ENCODE measurements at regions of chr6 and their contacts with region 1.

Region 1: DNA sequence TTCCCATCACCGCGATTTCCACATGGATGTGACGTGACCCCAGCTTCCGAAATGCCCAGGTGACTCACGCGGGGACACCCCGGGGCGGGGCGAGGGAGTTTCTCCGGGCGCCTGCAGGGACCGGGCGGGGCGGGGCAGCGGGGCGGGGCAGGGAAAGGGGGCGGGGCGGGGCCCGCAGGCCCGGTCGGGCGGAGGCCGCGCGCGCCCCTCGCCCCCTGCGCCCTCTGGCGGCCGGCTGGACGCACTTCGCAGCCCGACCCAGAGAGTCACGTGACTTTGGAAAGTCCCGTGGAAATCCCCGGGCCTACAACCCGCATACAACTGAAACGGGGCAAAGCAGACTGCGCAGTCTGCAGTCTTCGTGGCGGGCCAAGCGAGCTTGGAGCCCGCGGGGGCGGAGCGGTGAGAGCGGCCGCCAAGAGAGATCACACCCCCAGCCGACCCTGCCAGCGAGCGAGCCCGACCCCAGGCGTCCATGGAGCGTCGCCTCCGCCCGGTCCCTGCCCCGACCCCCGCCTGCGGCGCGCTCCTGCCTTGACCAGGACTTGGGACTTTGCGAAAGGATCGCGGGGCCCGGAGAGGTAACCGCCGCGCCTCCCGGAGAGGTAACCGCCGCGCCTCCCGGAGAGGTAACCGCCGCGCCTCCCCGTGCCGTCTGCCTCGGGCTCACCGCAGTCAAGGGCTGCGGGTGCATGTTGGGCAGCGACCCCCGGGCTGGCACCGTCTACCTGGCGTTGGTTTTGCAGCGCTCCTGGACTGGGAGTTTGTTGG is at the start of gene TNFAIP3:
- DNase-seq: peak; percentile 91 to 98 (median 95)
- ATAC-seq: peak; percentile 72
- H3K4me3 ChIP-seq: peak within 1 kb of the TSS; percentile 75 to 79
- H3K4me3 Mint-ChIP-seq: peak within 1 kb of the TSS; percentile 98
- H3K27ac ChIP-seq: peak within 1 kb of the TSS; percentile 95 to 96
- H3K27ac Mint-ChIP-seq: peak within 1 kb of the TSS; percentile 99
- H3K4me1 ChIP-seq: peaks cover 43% of the 10 kb centered on the region
- H3K4me1 Mint-ChIP-seq: peaks cover 47% of the 10 kb centered on the region
- H3K27me3 ChIP-seq: no peaks in the 10 kb centered on the region
- H3K27me3 Mint-ChIP-seq: no peaks in the 10 kb centered on the region
- CTCF ChIP-seq: peak; percentile 69
- total RNA-seq, gene TNFAIP3: 3,739 to 3,807 TPM

Region 2: GRCh38 chr6:136609873-136610706 is 1257.0 kb before region 1 on chr6:
- CTCF ChIA-PET with region 1: no interaction called
- POLR2A ChIA-PET with region 1: no interaction called
- intact Hi-C with region 1: no loop called
- DNase-seq: peak in 1 of 9 experiments; percentile 18
- ATAC-seq: no peak
- H3K4me3 ChIP-seq: no peak overlapping the region
- H3K4me3 Mint-ChIP-seq: no peak overlapping the region
- H3K27ac ChIP-seq: no peak overlapping the region
- H3K27ac Mint-ChIP-seq: peak overlapping the region; percentile 75
- H3K4me1 ChIP-seq: no peaks in the 10 kb centered on the region
- H3K4me1 Mint-ChIP-seq: peaks cover 3% of the 10 kb centered on the region
- H3K27me3 ChIP-seq: no peaks in the 10 kb centered on the region
- H3K27me3 Mint-ChIP-seq: no peaks in the 10 kb centered on the region
- CTCF ChIP-seq: no peak

Region 3: DNA sequence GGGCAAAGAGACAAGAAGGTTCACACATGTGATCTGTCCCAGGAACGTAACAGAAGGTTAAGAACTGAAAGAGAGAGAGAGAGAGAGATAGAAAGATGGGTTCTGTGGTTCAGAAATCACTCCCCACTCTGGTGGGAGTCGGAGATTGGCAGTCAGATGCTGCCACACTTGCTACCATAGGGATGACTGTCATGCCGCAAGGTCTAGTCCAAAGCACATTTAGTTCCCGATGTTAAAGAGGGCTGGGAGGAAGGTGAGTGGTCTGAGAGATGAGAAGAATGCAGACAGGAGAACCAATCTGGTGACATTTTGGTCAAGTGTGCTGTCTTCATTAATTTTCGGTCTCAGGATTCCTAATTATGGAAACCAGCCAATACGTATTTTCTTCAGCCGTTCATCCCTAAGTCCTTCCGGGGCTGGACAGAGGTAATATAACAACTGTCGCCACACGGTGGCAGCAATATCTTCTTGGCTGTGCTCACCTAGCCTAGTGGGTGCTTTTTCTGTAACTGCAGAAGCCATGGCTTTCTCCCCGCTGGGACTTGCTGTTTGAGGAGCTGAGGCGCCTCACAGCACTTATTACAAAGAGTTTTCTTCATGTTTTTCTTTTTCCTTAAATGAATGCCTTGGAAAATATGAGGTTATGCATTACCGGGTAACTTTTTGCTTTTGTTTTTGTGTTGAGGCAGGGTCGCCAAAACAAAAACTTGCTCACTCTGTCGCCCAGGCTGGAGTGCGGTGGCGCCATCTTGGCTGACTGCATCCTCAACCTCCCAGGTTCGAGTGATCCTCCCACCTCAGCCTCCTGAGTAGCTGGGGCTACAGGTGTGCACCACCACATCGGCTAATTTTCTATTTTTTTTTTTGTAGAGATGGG is 899.0 kb before region 1 on chr6:
- CTCF ChIA-PET with region 1: no interaction called
- POLR2A ChIA-PET with region 1: no interaction called
- intact Hi-C with region 1: no loop called
- DNase-seq: peak; percentile 19 to 74 (median 60)
- ATAC-seq: peak; percentile 61
- H3K4me3 ChIP-seq: no peak overlapping the region
- H3K4me3 Mint-ChIP-seq: no peak overlapping the region
- H3K27ac ChIP-seq: no peak overlapping the region
- H3K27ac Mint-ChIP-seq: no peak overlapping the region
- H3K4me1 ChIP-seq: peaks cover 4% of the 10 kb centered on the region
- H3K4me1 Mint-ChIP-seq: no peaks in the 10 kb centered on the region
- H3K27me3 ChIP-seq: no peaks in the 10 kb centered on the region
- H3K27me3 Mint-ChIP-seq: peaks cover 32% of the 10 kb centered on the region
- CTCF ChIP-seq: peak; percentile 59

Region 4: DNA sequence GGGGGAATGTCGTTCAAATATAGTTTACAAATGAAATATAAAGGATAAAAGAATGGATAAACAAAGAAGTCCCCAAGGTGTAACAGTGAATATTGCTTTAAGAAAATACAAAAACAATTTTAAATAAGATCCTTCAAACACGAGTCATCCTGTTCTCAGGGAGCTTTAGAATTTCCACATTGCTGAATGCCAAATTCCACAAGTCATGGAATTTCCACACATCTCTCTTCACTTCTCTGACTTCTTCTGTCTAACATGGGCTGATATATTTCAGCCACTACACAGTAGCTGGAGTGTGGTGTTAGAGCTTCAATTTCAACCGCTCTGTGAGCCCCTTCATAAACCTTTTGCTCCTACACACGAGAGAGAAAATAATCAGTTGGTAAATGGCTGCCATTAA is 721.7 kb before region 1 on chr6:
- CTCF ChIA-PET with region 1: no interaction called
- POLR2A ChIA-PET with region 1: no interaction called
- intact Hi-C with region 1: no loop called
- DNase-seq: no peak
- ATAC-seq: no peak
- H3K4me3 ChIP-seq: no peak overlapping the region
- H3K4me3 Mint-ChIP-seq: no peak overlapping the region
- H3K27ac ChIP-seq: no peak overlapping the region
- H3K27ac Mint-ChIP-seq: no peak overlapping the region
- H3K4me1 ChIP-seq: no peaks in the 10 kb centered on the region
- H3K4me1 Mint-ChIP-seq: peaks cover 2% of the 10 kb centered on the region
- H3K27me3 ChIP-seq: no peaks in the 10 kb centered on the region
- H3K27me3 Mint-ChIP-seq: no peaks in the 10 kb centered on the region
- CTCF ChIP-seq: no peak

Region 5: DNA sequence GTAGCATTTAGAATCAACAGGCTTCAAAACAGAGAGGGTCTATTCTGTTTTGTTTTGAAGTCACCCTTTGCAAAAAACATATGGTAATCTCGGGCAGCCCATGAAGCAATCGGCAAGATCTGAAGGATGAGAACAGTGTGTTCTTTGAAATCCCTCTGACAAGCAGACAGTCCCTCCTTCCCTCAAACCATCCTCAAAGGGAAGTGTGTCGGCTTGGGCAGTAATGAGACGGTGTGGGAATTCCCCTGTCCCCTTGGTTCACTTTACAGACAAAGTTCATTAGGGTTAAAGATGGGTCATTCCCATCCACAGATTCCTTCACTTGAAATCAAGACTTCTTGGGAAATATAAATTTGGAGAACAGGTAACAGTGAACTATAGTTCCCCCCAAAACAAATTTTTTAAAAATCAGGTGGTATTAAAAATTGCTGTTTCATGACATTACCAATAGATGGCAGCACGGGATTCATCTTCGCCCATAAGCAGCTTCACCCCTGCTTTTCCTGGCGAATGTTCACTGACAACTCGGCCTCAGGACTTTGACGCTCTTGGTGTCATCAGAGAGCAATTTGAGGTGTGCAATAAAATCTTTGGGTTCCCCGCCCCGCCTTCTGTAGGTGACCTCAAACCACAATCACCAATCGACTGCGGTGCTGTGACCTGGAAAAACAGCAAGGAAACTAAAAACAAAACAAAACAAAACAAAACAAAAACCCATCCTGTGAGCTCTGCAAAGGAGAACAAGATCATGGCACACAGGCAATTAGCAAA is 159.3 kb before region 1 on chr6:
- CTCF ChIA-PET with region 1: interaction called, 28 read pairs
- POLR2A ChIA-PET with region 1: interaction called, 44 read pairs
- intact Hi-C with region 1: loop called (anchors 1 kb)
- DNase-seq: peak; percentile 60 to 98 (median 82)
- ATAC-seq: peak; percentile 71
- H3K4me3 ChIP-seq: no peak overlapping the region
- H3K4me3 Mint-ChIP-seq: peak overlapping the region; percentile 3
- H3K27ac ChIP-seq: peak overlapping the region; percentile 46 to 82
- H3K27ac Mint-ChIP-seq: peak overlapping the region; percentile 88
- H3K4me1 ChIP-seq: peaks cover 37% of the 10 kb centered on the region
- H3K4me1 Mint-ChIP-seq: peaks cover 54% of the 10 kb centered on the region
- H3K27me3 ChIP-seq: no peaks in the 10 kb centered on the region
- H3K27me3 Mint-ChIP-seq: no peaks in the 10 kb centered on the region
- CTCF ChIP-seq: peak; percentile 81

Region 6: DNA sequence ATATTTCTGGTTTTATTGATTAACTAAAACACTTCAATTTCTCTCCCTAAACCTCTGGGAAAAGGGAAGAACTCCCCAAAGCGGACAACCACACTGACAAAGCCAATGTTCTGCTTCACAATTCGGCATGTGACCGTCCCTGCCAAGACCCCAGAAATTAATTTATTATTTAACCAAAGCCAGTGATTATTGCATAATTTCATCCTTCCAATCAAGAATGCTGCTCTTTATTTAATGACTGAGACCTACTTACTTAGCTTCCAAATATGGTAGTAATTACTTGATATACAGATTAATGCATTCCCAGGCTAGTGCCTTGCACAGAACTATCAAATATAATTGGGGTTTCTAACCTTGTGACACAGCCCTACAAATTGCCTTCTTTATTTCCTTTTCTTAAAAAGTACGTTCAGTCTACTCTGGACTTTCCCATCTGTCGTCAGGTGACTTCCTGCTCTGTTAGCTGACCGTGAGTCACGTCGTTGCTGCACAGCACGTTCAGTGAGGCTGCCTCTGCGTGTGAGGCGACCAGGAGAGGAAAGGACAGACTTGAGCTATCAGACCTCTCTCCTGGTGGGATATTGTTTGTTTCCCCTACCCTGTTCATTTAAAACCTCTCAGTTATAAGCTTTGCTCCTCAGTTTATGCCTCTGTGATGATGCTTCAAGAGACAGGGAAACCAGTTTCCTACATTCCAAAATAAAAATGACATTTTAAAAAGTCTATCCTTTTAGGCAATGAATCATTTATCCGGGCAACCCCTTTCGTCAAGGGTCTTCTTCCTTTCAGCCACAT is 55.8 kb before region 1 on chr6:
- CTCF ChIA-PET with region 1: interaction called, 18 read pairs
- POLR2A ChIA-PET with region 1: interaction called, 15 read pairs
- intact Hi-C with region 1: no loop called
- DNase-seq: peak; percentile 53 to 97 (median 75)
- ATAC-seq: peak; percentile 96
- H3K4me3 ChIP-seq: peak overlapping the region; percentile 2 to 10
- H3K4me3 Mint-ChIP-seq: peak overlapping the region; percentile 61
- H3K27ac ChIP-seq: peak overlapping the region; percentile 26 to 80
- H3K27ac Mint-ChIP-seq: peak overlapping the region; percentile 91
- H3K4me1 ChIP-seq: peaks cover 25% of the 10 kb centered on the region
- H3K4me1 Mint-ChIP-seq: peaks cover 33% of the 10 kb centered on the region
- H3K27me3 ChIP-seq: no peaks in the 10 kb centered on the region
- H3K27me3 Mint-ChIP-seq: no peaks in the 10 kb centered on the region
- CTCF ChIP-seq: no peak

Region 7: DNA sequence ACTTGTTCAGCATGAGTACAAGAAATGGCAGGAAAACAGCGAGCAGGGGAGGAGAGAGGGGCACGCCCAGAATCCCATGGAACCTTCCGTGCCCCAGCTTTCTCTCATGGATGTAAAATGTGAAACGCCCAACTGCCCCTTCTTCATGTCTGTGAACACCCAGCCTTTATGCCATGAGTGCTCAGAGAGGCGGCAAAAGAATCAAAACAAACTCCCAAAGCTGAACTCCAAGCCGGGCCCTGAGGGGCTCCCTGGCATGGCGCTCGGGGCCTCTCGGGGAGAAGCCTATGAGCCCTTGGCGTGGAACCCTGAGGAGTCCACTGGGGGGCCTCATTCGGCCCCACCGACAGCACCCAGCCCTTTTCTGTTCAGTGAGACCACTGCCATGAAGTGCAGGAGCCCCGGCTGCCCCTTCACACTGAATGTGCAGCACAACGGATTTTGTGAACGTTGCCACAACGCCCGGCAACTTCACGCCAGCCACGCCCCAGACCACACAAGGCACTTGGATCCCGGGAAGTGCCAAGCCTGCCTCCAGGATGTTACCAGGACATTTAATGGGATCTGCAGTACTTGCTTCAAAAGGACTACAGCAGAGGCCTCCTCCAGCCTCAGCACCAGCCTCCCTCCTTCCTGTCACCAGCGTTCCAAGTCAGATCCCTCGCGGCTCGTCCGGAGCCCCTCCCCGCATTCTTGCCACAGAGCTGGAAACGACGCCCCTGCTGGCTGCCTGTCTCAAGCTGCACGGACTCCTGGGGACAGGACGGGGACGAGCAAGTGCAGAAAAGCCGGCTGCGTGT is 11.6 kb after region 1 on chr6:
- CTCF ChIA-PET with region 1: interaction called, 50 read pairs
- POLR2A ChIA-PET with region 1: interaction called, 85 read pairs
- intact Hi-C with region 1: loop called (anchors 1 kb)
- DNase-seq: peak in 3 of 9 experiments; percentile 40 to 59 (median 45)
- ATAC-seq: no peak
- H3K4me3 ChIP-seq: no peak overlapping the region
- H3K4me3 Mint-ChIP-seq: peak overlapping the region; percentile 51
- H3K27ac ChIP-seq: no peak overlapping the region
- H3K27ac Mint-ChIP-seq: peak overlapping the region; percentile 45
- H3K4me1 ChIP-seq: peaks cover 40% of the 10 kb centered on the region
- H3K4me1 Mint-ChIP-seq: peaks cover 67% of the 10 kb centered on the region
- H3K27me3 ChIP-seq: no peaks in the 10 kb centered on the region
- H3K27me3 Mint-ChIP-seq: no peaks in the 10 kb centered on the region
- CTCF ChIP-seq: no peak

Region 8: GRCh38 chr6:137944793-137945498 is 77.8 kb after region 1 on chr6:
- CTCF ChIA-PET with region 1: interaction called, 72 read pairs
- POLR2A ChIA-PET with region 1: interaction called, 18 read pairs
- intact Hi-C with region 1: loop called (anchors 1 to 5 kb)
- DNase-seq: peak in 3 of 9 experiments; percentile 20 to 69 (median 53)
- ATAC-seq: peak; percentile 68
- H3K4me3 ChIP-seq: no peak overlapping the region
- H3K4me3 Mint-ChIP-seq: no peak overlapping the region
- H3K27ac ChIP-seq: no peak overlapping the region
- H3K27ac Mint-ChIP-seq: no peak overlapping the region
- H3K4me1 ChIP-seq: peaks cover 18% of the 10 kb centered on the region
- H3K4me1 Mint-ChIP-seq: peaks cover 22% of the 10 kb centered on the region
- H3K27me3 ChIP-seq: no peaks in the 10 kb centered on the region
- H3K27me3 Mint-ChIP-seq: no peaks in the 10 kb centered on the region
- CTCF ChIP-seq: peak; percentile 72

Region 9: DNA sequence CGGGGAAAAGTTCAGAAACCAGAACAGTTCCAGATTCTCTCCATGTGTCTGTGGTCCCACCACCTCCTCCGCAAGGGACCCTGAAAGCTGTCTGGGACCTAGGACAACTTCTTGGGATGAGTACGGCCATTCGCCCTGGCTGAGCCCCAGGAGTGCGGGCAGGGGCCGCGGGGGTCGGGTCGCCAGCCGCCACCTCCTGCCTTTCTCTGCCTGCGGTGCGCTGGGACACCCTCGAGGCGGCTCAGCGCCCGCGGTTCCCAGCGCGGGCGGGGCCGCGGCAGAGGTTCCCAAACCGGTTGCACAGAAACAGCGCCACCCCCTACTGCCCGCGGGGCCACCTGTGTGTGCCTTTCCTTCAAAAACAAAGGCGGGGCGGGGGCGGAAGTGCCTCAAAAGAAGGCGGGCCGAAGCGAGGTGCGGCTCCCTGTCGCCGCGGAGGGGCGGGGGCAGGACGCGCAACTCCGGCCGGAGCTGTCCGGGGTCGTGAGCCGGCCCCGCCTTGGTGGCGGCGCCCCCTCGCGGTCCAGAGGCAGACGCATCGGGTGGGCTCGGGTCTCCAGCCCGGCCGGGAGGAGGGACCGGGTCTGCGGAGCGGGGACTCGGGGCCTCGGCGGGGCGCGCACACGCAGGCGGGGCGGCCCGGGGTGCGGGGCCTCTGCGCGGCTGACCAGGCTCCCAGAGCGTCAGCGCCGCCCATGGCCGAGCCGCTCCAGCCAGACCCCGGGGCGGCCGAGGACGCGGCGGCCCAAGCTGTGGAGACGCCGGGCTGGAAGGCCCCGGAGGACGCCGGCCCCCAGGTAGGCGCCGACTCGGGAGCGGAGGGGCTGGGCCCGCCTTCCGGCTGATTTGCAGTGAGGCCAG is 536.9 kb after region 1 on chr6 and contains the start of gene HEBP2:
- CTCF ChIA-PET with region 1: no interaction called
- POLR2A ChIA-PET with region 1: no interaction called
- intact Hi-C with region 1: loop called in 1 of 2 experiments (anchors 10 kb)
- DNase-seq: peak; percentile 85 to 96 (median 93)
- ATAC-seq: peak; percentile 91
- H3K4me3 ChIP-seq: peak within 1 kb of the TSS; percentile 63 to 85
- H3K4me3 Mint-ChIP-seq: peak within 1 kb of the TSS; percentile 90
- H3K27ac ChIP-seq: peak within 1 kb of the TSS; percentile 63 to 85
- H3K27ac Mint-ChIP-seq: peak within 1 kb of the TSS; percentile 97
- H3K4me1 ChIP-seq: peaks cover 15% of the 10 kb centered on the region
- H3K4me1 Mint-ChIP-seq: peaks cover 23% of the 10 kb centered on the region
- H3K27me3 ChIP-seq: no peaks in the 10 kb centered on the region
- H3K27me3 Mint-ChIP-seq: no peaks in the 10 kb centered on the region
- CTCF ChIP-seq: peak; percentile 23
- total RNA-seq, gene HEBP2: 64.6 to 69.1 TPM